ENCODE measurements at regions of chr14 and their contacts with region 1.

Region 1: DNA sequence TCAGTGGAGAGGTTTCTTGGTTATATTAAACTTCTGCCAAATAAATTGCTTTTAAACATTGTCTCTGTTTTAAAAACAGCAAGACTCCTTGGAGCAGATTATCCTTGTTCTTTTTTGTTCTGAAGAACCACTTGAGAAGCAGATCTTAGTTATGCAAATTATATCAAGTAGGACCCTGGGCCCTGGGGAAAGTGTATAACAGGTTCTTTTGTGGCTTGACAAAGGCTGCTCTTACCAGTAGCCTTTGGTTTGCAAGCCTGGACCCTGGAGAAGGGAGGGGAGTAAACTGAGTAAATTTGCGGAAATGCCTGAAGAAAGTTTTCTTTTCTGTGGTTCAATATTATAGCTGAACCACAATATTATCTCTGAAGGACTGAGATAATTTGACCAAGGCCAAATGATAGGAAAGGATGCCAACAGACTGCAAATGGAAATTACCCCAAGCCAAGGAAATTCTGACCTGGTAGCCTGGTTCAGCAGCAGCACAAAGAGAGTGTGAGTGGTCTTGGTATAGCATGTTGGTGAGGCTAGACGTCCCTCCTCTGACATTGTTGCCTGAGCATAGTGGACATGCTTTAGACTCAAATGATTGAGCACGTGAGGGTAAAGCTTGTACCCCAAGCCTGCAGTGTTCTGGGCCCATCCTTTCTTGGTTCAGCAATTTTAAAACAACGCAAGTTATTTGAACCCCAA is 30.4 kb upstream of the SIX1 start:
- DNase-seq: no peak
- CTCF ChIP-seq: no peak

Region 2: GRCh38 chr14:60648934-60649874 is 30.5 kb before region 1 on chr14 and contains the start of gene SIX1:
- CTCF ChIA-PET with region 1: no interaction called
- POLR2A ChIA-PET with region 1: no interaction called
- DNase-seq: peak; percentile 69
- CTCF ChIP-seq: no peak

Region 3: DNA sequence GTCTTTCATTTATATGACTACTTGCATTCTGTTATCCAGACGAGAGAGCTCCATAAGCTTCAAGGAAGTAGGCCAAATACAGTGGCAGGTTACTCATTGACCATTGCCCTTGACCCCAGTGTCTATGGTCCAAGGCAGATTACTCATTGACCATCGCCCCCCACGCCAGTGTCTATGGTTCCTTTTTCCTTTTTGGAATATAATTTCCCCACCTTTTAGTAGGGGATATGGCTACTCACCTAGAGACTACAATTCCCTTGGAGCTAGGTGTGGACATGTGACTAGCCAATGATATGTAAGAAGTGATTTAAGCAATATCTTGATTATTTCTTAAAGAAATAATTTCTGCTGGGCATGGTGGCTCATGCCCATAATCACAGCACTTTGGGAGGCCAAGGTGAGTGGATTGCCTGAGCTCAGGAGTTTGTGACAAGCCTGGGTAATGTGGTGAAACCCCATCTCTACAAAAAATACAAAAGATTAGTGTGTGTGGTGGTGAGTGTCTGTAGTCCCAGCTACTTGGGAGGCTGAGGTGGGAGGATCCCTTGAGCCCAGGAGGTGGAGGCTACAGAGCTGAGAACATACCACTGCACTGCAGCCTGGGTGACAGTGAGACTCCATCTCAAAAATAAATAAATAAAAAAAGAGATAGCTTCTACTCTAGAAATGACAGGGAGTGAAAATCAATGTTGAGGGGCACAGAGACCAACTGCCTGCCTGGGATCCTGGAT is 11.8 kb after region 1 on chr14:
- CTCF ChIA-PET with region 1: interaction called, 13 read pairs
- POLR2A ChIA-PET with region 1: no interaction called
- DNase-seq: no peak
- CTCF ChIP-seq: no peak

Region 4: DNA sequence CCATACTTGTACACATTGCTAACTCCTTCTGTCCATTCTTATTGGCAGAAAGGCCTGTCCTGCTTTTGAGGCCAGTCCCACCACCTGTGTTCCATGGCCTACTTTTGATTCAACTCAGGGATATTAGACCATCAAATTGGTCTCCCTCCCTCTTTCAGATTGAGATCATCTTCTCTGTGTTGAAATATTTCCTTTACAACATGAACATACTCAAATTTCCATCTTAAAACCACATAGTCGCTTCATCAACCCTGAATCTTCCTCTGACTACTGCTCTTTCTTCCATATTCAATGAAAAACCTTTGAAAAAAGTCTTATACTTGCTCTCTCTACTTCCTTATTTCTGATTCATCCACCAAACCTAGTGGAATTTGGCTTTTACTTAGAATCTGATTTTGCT is 266.3 kb after region 1 on chr14:
- CTCF ChIA-PET with region 1: no interaction called
- POLR2A ChIA-PET with region 1: no interaction called
- DNase-seq: no peak
- CTCF ChIP-seq: no peak